ENCODE measurements at regions of chr12 and their contacts with region 1.

Region 1: DNA sequence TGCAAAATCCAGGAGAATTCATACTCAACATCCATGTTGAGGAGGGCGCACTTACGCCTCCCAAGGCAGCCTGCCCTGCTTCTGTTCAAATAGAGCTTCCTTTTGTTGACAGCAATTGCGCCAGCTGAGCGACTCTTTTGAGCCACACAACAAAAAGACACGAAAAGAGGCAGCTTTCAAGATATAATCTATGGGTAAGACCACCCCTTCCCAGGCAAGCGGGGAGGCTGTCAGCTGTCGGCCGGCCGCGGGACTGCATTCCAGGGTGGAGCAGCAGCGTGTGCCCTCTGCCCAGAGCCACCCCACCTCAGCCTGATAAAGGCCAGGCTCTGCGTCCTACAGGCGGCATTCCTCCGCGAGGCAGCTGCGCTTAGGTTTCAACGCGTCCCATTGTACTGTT is 15.8 kb upstream of the STAB2 start:
- DNase-seq: peak; percentile 57 to 76
- H3K4me3 ChIP-seq: peak overlapping the region; percentile 16; the same call in 1 of the 2 replicates
- H3K4me3 Mint-ChIP-seq: peak overlapping the region; percentile 43
- H3K27ac Mint-ChIP-seq: no peak overlapping the region
- H3K4me1 ChIP-seq: no peaks in the 10 kb centered on the region
- H3K4me1 Mint-ChIP-seq: no peaks in the 10 kb centered on the region
- H3K27me3 ChIP-seq: no peaks in the 10 kb centered on the region
- H3K27me3 Mint-ChIP-seq: peaks cover 7% of the 10 kb centered on the region
- CTCF ChIP-seq: no peak

Region 2: GRCh38 chr12:103632554-103633216 is 61.4 kb after region 1 on chr12:
- CTCF ChIA-PET with region 1: interaction called, 4 read pairs
- POLR2A ChIA-PET with region 1: no interaction called
- intact Hi-C with region 1: loop called (anchors 1 kb)
- DNase-seq: peak; percentile 70 to 80
- H3K4me3 ChIP-seq: no peak overlapping the region
- H3K4me3 Mint-ChIP-seq: no peak overlapping the region
- H3K27ac Mint-ChIP-seq: no peak overlapping the region
- H3K4me1 ChIP-seq: no peaks in the 10 kb centered on the region
- H3K4me1 Mint-ChIP-seq: no peaks in the 10 kb centered on the region
- H3K27me3 ChIP-seq: no peaks in the 10 kb centered on the region; the same call in 1 of the 2 replicates
- H3K27me3 Mint-ChIP-seq: peaks cover 4% of the 10 kb centered on the region
- CTCF ChIP-seq: peak; percentile 92 to 94

Region 3: DNA sequence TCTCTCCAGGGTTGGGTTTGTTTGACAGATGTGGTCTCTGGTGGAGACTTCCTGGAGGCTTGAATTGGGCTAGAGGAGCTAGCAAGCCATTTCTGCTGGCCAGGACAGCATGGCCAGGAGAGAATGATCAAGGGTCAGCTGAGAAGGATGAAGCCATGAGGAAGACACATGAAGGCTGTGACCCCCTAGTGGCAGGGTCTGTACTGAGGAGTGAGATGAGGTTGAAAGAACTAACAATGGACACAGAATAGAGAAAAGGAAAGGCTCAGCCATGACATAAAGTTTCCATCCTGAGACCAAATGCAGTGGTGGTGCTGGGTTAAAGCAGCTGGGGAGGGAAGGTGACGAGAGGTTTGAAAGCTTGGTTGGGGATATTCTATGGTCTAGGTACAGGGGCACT is 179.9 kb after region 1 on chr12:
- CTCF ChIA-PET with region 1: no interaction called
- POLR2A ChIA-PET with region 1: no interaction called
- intact Hi-C with region 1: loop called (anchors 1 kb)
- DNase-seq: peak in 1 of 2 experiments; percentile 18
- H3K4me3 ChIP-seq: no peak overlapping the region
- H3K4me3 Mint-ChIP-seq: no peak overlapping the region
- H3K27ac Mint-ChIP-seq: no peak overlapping the region
- H3K4me1 ChIP-seq: no peaks in the 10 kb centered on the region
- H3K4me1 Mint-ChIP-seq: no peaks in the 10 kb centered on the region
- H3K27me3 ChIP-seq: no peaks in the 10 kb centered on the region
- H3K27me3 Mint-ChIP-seq: no peaks in the 10 kb centered on the region
- CTCF ChIP-seq: peak; percentile 30 to 46

Region 4: GRCh38 chr12:103868215-103868614 is 296.9 kb after region 1 on chr12:
- CTCF ChIA-PET with region 1: no interaction called
- POLR2A ChIA-PET with region 1: no interaction called
- intact Hi-C with region 1: loop called (anchors 1 kb)
- DNase-seq: no peak
- H3K4me3 ChIP-seq: no peak overlapping the region
- H3K4me3 Mint-ChIP-seq: no peak overlapping the region
- H3K27ac Mint-ChIP-seq: no peak overlapping the region
- H3K4me1 ChIP-seq: no peaks in the 10 kb centered on the region
- H3K4me1 Mint-ChIP-seq: no peaks in the 10 kb centered on the region
- H3K27me3 ChIP-seq: no peaks in the 10 kb centered on the region
- H3K27me3 Mint-ChIP-seq: no peaks in the 10 kb centered on the region
- CTCF ChIP-seq: no peak